Esophagus squamous epithelium (tissue), 5 donors: ENCODE measurements at regions of chr12 and their contacts with region 1.

Region 1: DNA sequence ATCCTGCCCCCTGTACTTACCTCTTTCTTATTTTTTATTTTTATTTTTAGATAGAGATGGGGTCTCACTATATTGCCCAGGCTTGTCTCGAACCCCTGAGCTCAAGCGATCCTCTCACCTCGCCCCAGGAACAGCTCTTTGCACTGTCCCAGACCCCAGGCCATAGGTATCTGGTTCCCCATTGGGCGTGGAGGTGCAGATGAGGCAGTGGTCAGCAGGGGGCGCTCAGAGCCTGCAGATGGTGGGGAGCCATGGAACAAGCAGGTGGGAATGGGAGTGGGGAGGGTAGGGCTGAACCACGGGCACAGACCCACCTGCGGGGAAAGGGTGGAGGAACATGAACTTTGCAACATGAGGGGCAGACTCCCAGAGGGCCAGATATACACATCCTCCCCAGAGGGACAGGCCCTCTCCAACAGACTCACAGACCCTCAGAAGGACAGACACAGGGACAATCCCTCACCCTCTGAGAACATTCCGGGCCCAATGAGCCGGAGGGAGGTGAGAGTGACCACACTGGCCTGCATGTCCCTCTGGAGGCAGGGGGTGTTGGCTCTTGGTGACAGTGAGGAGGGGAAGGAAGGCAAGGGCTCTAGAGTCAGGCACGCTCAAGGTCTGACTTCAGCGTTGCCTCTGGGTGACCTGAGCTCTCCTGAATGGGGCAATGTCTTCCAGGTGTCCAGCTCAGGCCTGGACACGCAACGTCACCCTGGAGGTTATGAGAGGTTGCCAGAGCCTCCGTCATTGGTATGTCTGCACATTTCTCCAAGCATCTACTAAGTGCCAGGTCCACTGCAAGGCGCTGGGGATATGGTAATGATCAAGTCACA is 34.9 kb downstream of the KRT80 start:
- DNase-seq: no peak
- H3K4me3 ChIP-seq: no peak overlapping the region
- H3K27ac ChIP-seq: peak overlapping the region in 3 of 4 donors; percentile 79 to 100 (median 99)
- H3K4me1 ChIP-seq: peaks cover 33 to 55% (median 36%) of the 10 kb centered on the region in 3 donors
- H3K27me3 ChIP-seq: peaks cover 0 to 10% (median 0%) of the 10 kb centered on the region in 4 donors
- CTCF ChIP-seq: peak; percentile 54 to 96 (median 95)
- POLR2A ChIP-seq: no peak

Region 2: GRCh38 chr12:52327052-52327829 is 170.3 kb after region 1 on chr12:
- intact Hi-C with region 1: loop called (anchors 5 kb)
- DNase-seq: peak; percentile 20
- H3K4me3 ChIP-seq: no peak overlapping the region
- H3K27ac ChIP-seq: peak overlapping the region in 2 of 4 donors; percentile 37 to 56
- H3K4me1 ChIP-seq: peaks cover 3 to 18% (median 5%) of the 10 kb centered on the region in 3 donors
- H3K27me3 ChIP-seq: peaks cover 0 to 21% (median 0%) of the 10 kb centered on the region in 4 donors
- CTCF ChIP-seq: peak; percentile 74 to 92 (median 82)
- POLR2A ChIP-seq: no peak

Region 3: DNA sequence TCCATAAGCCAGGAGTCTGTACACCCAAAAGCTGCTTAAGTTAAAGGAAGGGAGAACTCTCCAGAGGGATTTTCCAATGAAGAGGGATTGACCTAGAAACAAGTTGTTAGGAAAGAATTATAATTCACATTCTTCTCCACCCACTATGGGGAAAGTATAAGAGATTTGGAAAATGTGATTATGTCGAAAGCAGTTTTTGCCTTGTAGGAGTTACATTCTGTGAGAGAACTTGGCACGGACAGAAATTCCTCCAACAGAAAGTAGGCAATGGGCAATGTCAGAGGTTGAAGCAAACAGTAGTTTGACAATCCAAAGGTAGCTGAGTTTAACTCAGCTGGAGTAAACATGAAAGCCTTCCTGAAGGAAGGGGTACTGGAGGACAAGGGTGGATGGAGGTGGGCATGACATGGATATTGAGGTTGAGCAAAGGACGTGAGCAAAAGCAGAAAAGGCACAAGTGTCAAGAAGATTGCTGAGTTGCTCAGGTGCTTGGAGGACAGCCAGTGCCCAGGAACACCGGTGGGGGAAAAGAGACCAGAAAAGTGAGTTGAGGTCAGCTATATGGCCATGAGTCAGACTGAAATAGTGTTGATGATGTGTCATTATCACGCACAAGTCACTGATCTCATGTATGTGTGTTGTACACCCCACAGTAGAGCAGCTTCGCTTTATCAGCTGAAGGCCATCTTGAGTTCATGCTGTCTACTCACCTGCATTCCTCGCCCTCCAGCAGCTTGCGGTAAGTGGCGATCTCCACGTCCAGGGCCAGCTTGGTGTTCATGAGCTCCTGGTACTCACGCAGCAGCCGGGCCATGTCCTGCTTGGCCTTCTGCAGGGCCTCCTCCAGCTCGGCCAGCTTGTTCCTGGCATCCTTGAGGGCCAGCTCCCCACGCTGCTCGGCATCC is 359.2 kb after region 1 on chr12:
- intact Hi-C with region 1: loop called (anchors 10 kb)
- DNase-seq: no peak
- H3K4me3 ChIP-seq: peak overlapping the region; percentile 51 to 66 (median 52)
- H3K27ac ChIP-seq: peak overlapping the region; percentile 85 to 94 (median 90)
- H3K4me1 ChIP-seq: peaks cover 0 to 49% (median 4%) of the 10 kb centered on the region in 3 donors
- H3K27me3 ChIP-seq: peaks cover 0 to 6% (median 0%) of the 10 kb centered on the region in 4 donors
- CTCF ChIP-seq: no peak
- POLR2A ChIP-seq: no peak

Region 4: GRCh38 chr12:52976147-52977071 is 819.5 kb after region 1 on chr12:
- intact Hi-C with region 1: loop called (anchors 10 kb)
- DNase-seq: no peak
- H3K4me3 ChIP-seq: no peak overlapping the region
- H3K27ac ChIP-seq: peak overlapping the region in 1 of 4 donors; percentile 44
- H3K4me1 ChIP-seq: peaks cover 0 to 13% (median 5%) of the 10 kb centered on the region in 3 donors
- H3K27me3 ChIP-seq: peaks cover 0 to 41% (median 0%) of the 10 kb centered on the region in 4 donors
- CTCF ChIP-seq: peak in 1 of 6 experiments; percentile 20
- POLR2A ChIP-seq: no peak

Region 5: GRCh38 chr12:53414756-53415417 is 1257.9 kb after region 1 on chr12:
- intact Hi-C with region 1: no loop called
- DNase-seq: no peak
- H3K4me3 ChIP-seq: no peak overlapping the region
- H3K27ac ChIP-seq: no peak overlapping the region
- H3K4me1 ChIP-seq: peaks cover 0 to 42% (median 6%) of the 10 kb centered on the region in 3 donors
- H3K27me3 ChIP-seq: no peaks in the 10 kb centered on the region
- CTCF ChIP-seq: no peak
- POLR2A ChIP-seq: no peak